ENCODE measurements at regions of chr9 and their contacts with region 1.

Region 1: DNA sequence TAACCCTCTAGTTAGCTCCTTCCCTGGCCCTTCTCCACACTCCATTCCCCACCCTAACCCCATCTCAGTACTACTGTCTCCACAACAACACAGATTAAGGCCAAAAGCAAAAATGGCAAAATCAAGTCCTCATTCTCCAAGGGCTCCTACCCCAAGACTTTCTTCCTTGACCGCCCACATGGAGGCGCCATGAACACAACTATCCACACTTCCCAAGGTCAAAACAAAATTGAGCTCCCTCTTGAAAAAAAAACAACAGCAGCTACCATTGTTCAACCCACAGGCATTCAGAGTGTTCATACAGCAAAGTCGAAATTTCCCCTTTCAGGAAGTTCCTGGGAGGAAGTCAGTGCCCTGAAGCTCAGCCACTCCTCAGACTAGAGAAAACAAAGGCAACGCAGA is 54.4 kb downstream of the GNAQ start:
- DNase-seq: no peak
- ATAC-seq: peak; percentile 44
- H3K4me3 ChIP-seq: no peak overlapping the region
- H3K27ac ChIP-seq: no peak overlapping the region
- H3K4me1 ChIP-seq: no peaks in the 10 kb centered on the region
- H3K27me3 ChIP-seq: 0 out of 4 replicates have a peak, but pooled peaks cover 0 to 2% of the 10 kb centered on the region in 2 experiments
- CTCF ChIP-seq: peak; percentile 24 to 44 (median 35); a peak in 4 of 6 replicates
- EP300 ChIP-seq: no peak
- POLR2A ChIP-seq: no peak
- RAD21 ChIP-seq: peak; percentile 44

Region 2: GRCh38 chr9:77916410-77916819 is 60.8 kb before region 1 on chr9:
- CTCF ChIA-PET with region 1: interaction called, 26 read pairs
- POLR2A ChIA-PET with region 1: interaction called, 4 read pairs
- RAD21 ChIA-PET with region 1: interaction called, 13 read pairs
- SMC1A ChIA-PET with region 1: interaction called, 9 read pairs
- in situ Hi-C with region 1: no loop called
- intact Hi-C with region 1: loop called (anchors 10 kb)
- DNase-seq: peak; percentile 24
- ATAC-seq: peak; percentile 89
- H3K4me3 ChIP-seq: no peak overlapping the region
- H3K27ac ChIP-seq: no peak overlapping the region; the same call in 1 of the 2 replicates
- H3K4me1 ChIP-seq: peaks cover 7% of the 10 kb centered on the region
- H3K27me3 ChIP-seq: no peaks in the 10 kb centered on the region
- CTCF ChIP-seq: no peak
- EP300 ChIP-seq: peak; percentile 72 to 86; a peak in 3 of 4 replicates
- POLR2A ChIP-seq: no peak
- RAD21 ChIP-seq: no peak

Region 3: DNA sequence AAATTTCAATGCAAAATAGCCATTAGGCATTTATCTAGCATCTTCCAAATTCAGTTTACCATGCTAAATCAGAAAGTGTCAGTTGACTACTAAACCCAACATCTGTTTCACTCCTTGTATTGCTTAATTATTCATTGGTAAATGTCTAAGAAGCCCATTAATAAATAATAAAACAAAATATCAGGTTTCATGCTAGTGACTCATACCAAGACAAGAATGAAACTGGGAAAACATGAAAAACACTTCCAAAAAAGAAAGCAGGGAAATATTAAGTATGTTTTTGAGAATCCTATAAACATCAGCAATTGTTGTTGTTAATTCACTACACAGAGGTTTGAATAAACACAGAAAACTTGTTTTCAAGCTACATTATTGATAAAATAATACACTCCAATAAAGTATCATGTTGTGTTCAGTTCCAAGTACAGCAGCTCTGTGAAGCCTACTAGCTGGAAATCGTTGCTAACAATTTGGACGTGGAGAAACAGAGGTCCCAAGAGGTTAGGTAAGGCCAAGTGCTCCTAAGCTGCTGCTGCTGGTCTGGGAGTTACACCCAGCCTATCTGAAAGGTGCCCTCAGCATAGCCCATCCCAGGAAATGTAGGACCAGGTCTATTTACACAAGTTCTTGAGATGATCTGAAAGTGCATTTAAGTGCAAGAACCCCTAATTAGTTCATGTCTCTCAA is 24.4 kb before region 1 on chr9:
- CTCF ChIA-PET with region 1: interaction called, 4 read pairs
- POLR2A ChIA-PET with region 1: interaction called, 4 read pairs
- RAD21 ChIA-PET with region 1: interaction called, 15 read pairs
- SMC1A ChIA-PET with region 1: interaction called, 19 read pairs
- in situ Hi-C with region 1: no loop called
- intact Hi-C with region 1: no loop called
- DNase-seq: no peak
- ATAC-seq: peak; percentile 15; the same call in 1 of the 3 replicates
- H3K4me3 ChIP-seq: no peak overlapping the region
- H3K27ac ChIP-seq: no peak overlapping the region
- H3K4me1 ChIP-seq: no peaks in the 10 kb centered on the region
- H3K27me3 ChIP-seq: no peaks in the 10 kb centered on the region
- CTCF ChIP-seq: no peak
- EP300 ChIP-seq: no peak
- POLR2A ChIP-seq: no peak
- RAD21 ChIP-seq: no peak

Region 4: GRCh38 chr9:77997611-77998284 is 20.5 kb after region 1 on chr9:
- CTCF ChIA-PET with region 1: interaction called, 6 read pairs
- POLR2A ChIA-PET with region 1: interaction called, 3 read pairs
- RAD21 ChIA-PET with region 1: interaction called, 8 read pairs
- SMC1A ChIA-PET with region 1: interaction called, 19 read pairs
- in situ Hi-C with region 1: no loop called
- intact Hi-C with region 1: no loop called
- DNase-seq: no peak
- ATAC-seq: peak; percentile 66
- H3K4me3 ChIP-seq: no peak overlapping the region
- H3K27ac ChIP-seq: no peak overlapping the region
- H3K4me1 ChIP-seq: no peaks in the 10 kb centered on the region
- H3K27me3 ChIP-seq: no peaks in the 10 kb centered on the region; a peak in 3 of 4 replicates
- CTCF ChIP-seq: no peak
- EP300 ChIP-seq: no peak
- POLR2A ChIP-seq: no peak
- RAD21 ChIP-seq: no peak

Region 5: GRCh38 chr9:78030296-78030552 is 53.0 kb after region 1 on chr9:
- CTCF ChIA-PET with region 1: interaction called, 153 read pairs
- POLR2A ChIA-PET with region 1: interaction called, 11 read pairs
- RAD21 ChIA-PET with region 1: interaction called, 123 read pairs
- SMC1A ChIA-PET with region 1: interaction called, 145 read pairs
- in situ Hi-C with region 1: no loop called
- intact Hi-C with region 1: loop called (anchors 5 kb)
- DNase-seq: no peak
- ATAC-seq: peak; percentile 54
- H3K4me3 ChIP-seq: no peak overlapping the region
- H3K27ac ChIP-seq: no peak overlapping the region
- H3K4me1 ChIP-seq: no peaks in the 10 kb centered on the region
- H3K27me3 ChIP-seq: peaks cover 8 to 17% of the 10 kb centered on the region in 2 experiments
- CTCF ChIP-seq: no peak
- EP300 ChIP-seq: no peak
- POLR2A ChIP-seq: no peak
- RAD21 ChIP-seq: no peak

Region 6: GRCh38 chr9:78213712-78214111 is 236.5 kb after region 1 on chr9:
- CTCF ChIA-PET with region 1: no interaction called
- POLR2A ChIA-PET with region 1: no interaction called
- RAD21 ChIA-PET with region 1: interaction called, 4 read pairs
- SMC1A ChIA-PET with region 1: interaction called, 6 read pairs
- in situ Hi-C with region 1: no loop called
- intact Hi-C with region 1: loop called (anchors 1 kb)
- DNase-seq: no peak
- ATAC-seq: peak; percentile 70
- H3K4me3 ChIP-seq: no peak overlapping the region
- H3K27ac ChIP-seq: no peak overlapping the region
- H3K4me1 ChIP-seq: peaks cover 13% of the 10 kb centered on the region
- H3K27me3 ChIP-seq: no peaks in the 10 kb centered on the region
- CTCF ChIP-seq: peak; percentile 25 to 52 (median 40); a peak in 5 of 6 replicates
- EP300 ChIP-seq: no peak
- POLR2A ChIP-seq: no peak
- RAD21 ChIP-seq: peak; percentile 58